Gastrocnemius medialis (tissue), 4 donors: ENCODE measurements at regions of chr19 and their contacts with region 1.

Region 1: GRCh38 chr19:34677386-34678084 is at the start of gene ZNF302:
- DNase-seq: peak; percentile 95 to 96
- ATAC-seq: peak; percentile 95 to 96
- H3K4me3 ChIP-seq: peak within 1 kb of the TSS; percentile 76 to 93 (median 90)
- H3K27ac ChIP-seq: peak within 1 kb of the TSS; percentile 92 to 99 (median 98)
- H3K4me1 ChIP-seq: peaks cover 23 to 57% of the 10 kb centered on the region in 2 donors
- H3K27me3 ChIP-seq: no peaks in the 10 kb centered on the region
- CTCF ChIP-seq: peak in 1 of 5 experiments; percentile 5
- POLR2A ChIP-seq: peak; percentile 86 to 88
- total RNA-seq, gene ZNF302: 14.9 to 43.2 (median 28.2) TPM

Region 2: DNA sequence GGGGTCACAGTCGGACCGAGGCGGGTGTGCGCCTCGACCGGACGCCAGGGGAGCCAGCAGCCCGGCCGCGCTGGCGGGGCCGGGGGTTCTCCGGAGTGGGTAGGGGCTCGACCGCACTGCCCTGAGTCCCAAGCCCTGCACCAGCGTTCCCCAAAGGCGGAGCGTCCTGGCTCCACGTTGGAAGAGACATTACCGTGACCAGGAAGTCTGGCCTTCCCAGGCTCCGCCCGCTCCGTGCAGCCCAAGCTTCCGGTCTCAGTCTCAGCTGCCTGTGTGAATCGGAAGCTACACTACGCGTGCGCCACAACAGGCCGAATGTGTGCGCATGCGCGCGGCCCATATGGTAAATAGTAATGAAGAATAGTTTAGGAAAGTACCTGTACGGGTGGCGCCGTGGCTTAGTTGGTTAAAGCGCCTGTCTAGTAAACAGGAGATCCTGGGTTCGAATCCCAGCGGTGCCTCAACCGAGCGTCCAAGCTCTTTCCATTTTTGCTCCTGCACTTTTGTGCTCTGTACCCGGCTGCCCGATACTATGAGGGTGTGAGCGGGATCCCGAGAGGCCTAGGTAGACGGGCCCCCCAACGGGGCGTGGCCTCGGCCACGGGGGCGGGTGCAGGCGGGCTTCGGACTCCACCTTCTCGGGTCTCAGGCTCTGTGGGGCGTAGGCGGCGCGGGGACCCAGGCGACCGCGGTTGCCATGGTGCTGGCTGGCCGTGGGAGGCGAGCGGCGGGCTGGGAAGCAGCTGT is 1500.7 kb before region 1 on chr19:
- in situ Hi-C with region 1: no loop called
- intact Hi-C with region 1: loop called (anchors 10 kb)
- DNase-seq: peak; percentile 89 to 96
- ATAC-seq: peak; percentile 96 to 97
- H3K4me3 ChIP-seq: peak overlapping the region; percentile 77 to 100 (median 84)
- H3K27ac ChIP-seq: peak overlapping the region; percentile 89 to 97 (median 92)
- H3K4me1 ChIP-seq: peaks cover 17 to 29% of the 10 kb centered on the region in 2 donors
- H3K27me3 ChIP-seq: no peaks in the 10 kb centered on the region
- CTCF ChIP-seq: peak; percentile 25 to 45 (median 32)
- POLR2A ChIP-seq: peak; percentile 77 to 79

Region 3: DNA sequence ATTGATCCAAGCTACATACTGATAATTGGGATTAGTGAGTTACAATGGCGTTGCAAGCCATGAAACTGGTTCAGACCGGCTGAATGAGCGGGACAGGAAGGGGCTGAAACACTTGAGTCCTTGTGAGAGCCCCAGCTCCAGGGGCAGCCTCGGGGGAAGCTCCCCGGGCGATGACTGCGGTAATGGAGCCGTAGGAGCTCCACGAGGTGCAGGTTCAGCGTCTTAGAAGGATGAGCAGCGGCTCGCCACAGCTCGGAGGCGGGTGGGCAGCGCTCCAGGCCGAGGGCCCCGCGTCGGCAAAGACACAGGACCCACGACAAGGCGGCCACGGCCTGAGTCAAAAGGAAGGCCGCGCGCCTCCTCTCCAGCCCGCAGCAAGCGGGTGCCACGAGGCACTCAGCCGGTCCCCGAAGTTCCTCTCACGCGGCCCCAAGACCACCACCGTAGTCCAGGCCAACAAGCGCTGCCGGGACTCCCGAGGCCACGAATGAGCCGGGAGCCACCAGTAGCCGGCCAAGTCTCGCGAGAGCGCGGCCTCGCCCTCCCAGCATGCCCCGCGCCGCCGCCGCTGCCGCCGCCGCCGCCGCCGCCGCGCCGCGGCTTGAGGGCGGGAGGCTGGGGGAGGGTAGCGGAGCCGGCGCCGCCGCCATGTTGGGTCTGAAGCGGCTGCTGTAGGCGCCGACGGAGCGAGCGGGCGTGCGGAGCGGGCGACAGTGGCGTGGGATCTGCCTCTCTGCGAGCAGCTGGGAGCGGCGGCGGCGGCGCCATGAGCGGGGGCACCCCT is 505.5 kb before region 1 on chr19 and contains the start of gene LSM14A:
- in situ Hi-C with region 1: no loop called
- intact Hi-C with region 1: loop called (anchors 2 kb)
- DNase-seq: peak; percentile 79 to 89
- ATAC-seq: peak; percentile 91 to 93
- H3K4me3 ChIP-seq: peak within 1 kb of the TSS; percentile 87 to 94 (median 90)
- H3K27ac ChIP-seq: peak within 1 kb of the TSS; percentile 94 to 98 (median 98)
- H3K4me1 ChIP-seq: peaks cover 43 to 44% of the 10 kb centered on the region in 2 donors
- H3K27me3 ChIP-seq: no peaks in the 10 kb centered on the region
- CTCF ChIP-seq: peak in 1 of 5 experiments; percentile 30
- POLR2A ChIP-seq: peak; percentile 82 to 89
- total RNA-seq, gene LSM14A: 104 to 120 (median 115) TPM

Region 4: DNA sequence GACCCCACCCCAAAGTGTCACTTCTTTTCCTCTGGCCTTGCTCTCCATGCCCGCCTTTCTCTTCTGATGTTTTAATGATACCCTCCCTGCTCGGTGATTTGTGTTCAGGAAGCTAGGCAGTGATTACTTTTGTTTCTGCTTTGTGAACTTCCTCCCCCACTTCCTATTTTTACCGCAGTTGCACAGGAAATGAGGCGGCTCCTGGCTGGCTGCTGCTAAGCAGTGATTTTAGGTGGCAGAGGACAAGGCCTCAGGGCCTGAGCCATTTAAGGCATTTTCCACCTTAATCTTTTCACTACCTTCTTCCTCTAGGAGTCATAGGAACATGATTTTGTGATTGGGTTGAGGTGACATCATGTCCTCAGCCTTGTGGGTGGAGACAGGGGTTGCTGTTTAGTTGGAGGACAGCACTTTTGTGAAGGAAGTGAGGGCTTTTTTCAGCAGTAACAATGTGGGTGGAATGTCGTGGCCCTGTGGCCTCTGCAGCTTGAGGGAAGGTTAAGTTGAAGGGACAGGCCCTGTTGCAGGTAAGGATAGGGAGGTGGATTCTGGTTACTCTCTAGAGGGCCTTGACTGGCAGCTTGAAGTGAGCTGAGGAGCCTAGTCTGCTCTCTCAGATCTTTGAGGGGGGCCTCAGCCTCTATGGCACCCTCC is 407.4 kb before region 1 on chr19:
- in situ Hi-C with region 1: no loop called
- intact Hi-C with region 1: loop called (anchors 10 kb)
- DNase-seq: peak; percentile 27 to 37
- ATAC-seq: peak; percentile 64 to 70
- H3K4me3 ChIP-seq: peak overlapping the region in 3 of 4 donors; percentile 4 to 29 (median 5)
- H3K27ac ChIP-seq: peak overlapping the region; percentile 74 to 84 (median 82)
- H3K4me1 ChIP-seq: peaks cover 67% of the 10 kb centered on the region in 2 donors
- H3K27me3 ChIP-seq: no peaks in the 10 kb centered on the region
- CTCF ChIP-seq: no peak
- POLR2A ChIP-seq: peak; percentile 28 to 65

Region 5: GRCh38 chr19:34428549-34429285 is 248.8 kb before region 1 on chr19:
- in situ Hi-C with region 1: no loop called
- intact Hi-C with region 1: loop called (anchors 2 kb)
- DNase-seq: peak; percentile 69 to 85
- ATAC-seq: peak; percentile 88 to 90
- H3K4me3 ChIP-seq: peak overlapping the region; percentile 84 to 98 (median 91)
- H3K27ac ChIP-seq: peak overlapping the region; percentile 97 to 98 (median 98)
- H3K4me1 ChIP-seq: peaks cover 44 to 47% of the 10 kb centered on the region in 2 donors
- H3K27me3 ChIP-seq: no peaks in the 10 kb centered on the region
- CTCF ChIP-seq: no peak
- POLR2A ChIP-seq: peak; percentile 71 to 75

Region 6: DNA sequence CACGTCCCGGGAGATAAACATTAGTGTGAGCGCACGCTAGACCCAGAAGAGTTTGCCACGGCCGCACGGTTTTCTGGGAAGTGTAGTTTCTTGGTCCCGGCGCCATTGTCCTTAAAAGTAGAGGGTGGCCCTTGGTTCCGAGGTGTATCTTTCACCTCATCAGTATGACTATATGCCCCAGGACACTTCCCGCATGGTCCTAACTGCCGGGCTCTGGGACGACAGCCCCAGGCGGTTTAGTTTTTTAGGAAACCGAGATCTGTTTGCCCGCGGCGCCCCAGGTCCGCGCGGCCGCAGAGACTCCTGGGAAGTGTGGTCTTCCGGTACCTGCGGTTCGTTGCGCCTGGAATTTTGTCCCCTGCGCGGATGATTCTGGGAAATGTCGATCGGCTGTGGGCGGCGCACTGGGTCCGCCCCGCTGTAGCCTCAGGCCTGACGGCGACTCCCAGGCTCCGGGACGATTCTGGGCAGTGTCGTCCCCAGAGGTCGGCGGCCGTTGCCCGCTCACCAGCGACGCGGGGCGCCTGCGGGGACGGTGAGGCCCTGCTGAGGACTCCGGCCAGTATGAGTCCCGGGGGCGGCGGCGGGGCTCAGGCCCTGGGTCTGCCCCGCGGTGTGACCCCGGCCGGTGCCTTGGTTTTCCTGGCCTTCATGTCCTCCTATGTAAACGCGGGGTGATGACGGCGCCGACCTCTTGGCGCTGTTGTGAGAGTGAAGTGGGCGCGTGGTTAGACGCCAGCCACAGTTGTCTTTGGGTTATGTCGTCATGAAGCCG is 56.5 kb after region 1 on chr19 and contains the start of gene ZNF181:
- in situ Hi-C with region 1: loop called in 1 of 4 experiments (anchors 10 kb)
- intact Hi-C with region 1: loop called (anchors 1 kb)
- DNase-seq: peak; percentile 81 to 89
- ATAC-seq: peak; percentile 92 to 93
- H3K4me3 ChIP-seq: peak within 1 kb of the TSS; percentile 77 to 98 (median 86)
- H3K27ac ChIP-seq: peak within 1 kb of the TSS; percentile 96 to 100 (median 98)
- H3K4me1 ChIP-seq: peaks cover 30 to 34% of the 10 kb centered on the region in 2 donors
- H3K27me3 ChIP-seq: no peaks in the 10 kb centered on the region
- CTCF ChIP-seq: peak in 1 of 5 experiments; percentile 20
- POLR2A ChIP-seq: peak; percentile 3 to 57
- total RNA-seq, gene ZNF181: 27.3 to 77.9 (median 49.3) TPM

Region 7: DNA sequence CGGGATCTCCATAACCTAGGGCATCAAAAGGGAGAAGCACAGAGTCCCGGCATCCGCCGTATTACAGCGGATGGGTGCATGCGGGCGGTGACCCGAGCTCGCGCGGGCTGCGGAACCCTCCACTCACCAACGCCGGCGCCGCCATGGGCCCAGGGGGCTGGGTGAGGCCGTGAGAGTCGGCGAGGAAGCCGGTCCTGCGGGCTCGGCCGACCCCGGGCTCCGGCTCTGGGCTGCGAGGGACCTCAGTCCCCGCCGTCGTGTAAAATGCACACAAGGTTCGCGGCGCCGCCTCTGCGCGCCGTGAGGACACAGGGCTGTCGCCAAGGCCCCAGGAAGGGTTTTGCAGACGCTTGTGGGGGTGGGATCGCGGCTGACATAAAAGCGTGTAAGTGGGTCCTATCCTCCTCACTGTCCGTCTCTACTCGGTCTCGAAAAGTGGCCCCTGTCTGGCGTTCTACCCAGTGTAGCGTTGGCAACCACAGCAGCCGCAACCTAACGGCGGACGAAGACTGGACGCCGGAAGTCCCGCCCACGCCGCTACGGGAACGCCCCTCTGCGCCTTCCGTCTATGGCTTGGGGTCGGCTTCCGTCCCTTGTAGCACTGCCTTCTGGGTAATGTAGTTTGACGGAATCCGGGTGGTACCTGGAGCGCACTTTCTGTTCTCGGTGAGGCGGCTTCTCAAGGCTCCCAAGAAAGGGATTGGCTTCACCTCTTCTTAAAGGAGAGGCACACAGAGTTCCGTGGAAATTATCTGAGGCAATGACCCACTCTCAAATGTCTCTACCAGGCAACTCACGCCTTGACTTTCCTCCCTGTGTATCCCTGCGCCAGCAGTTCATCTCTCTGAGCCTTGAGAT is 95.4 kb after region 1 on chr19 and contains the start of gene ZNF599:
- in situ Hi-C with region 1: no loop called
- intact Hi-C with region 1: loop called (anchors 2 kb)
- DNase-seq: peak; percentile 85 to 89
- ATAC-seq: peak; percentile 99
- H3K4me3 ChIP-seq: peak within 1 kb of the TSS; percentile 72 to 97 (median 87)
- H3K27ac ChIP-seq: peak within 1 kb of the TSS; percentile 75 to 88 (median 82)
- H3K4me1 ChIP-seq: peaks cover 6 to 9% of the 10 kb centered on the region in 2 donors
- H3K27me3 ChIP-seq: peaks cover 0 to 3% (median 0%) of the 10 kb centered on the region in 3 donors
- CTCF ChIP-seq: peak in 1 of 5 experiments; percentile 13
- POLR2A ChIP-seq: peak; percentile 39 to 53
- total RNA-seq, gene ZNF599: 1.2 to 6.3 (median 2.4) TPM